BJ (cell line): ENCODE measurements at regions of chr10 and their contacts with region 1.

Region 1: DNA sequence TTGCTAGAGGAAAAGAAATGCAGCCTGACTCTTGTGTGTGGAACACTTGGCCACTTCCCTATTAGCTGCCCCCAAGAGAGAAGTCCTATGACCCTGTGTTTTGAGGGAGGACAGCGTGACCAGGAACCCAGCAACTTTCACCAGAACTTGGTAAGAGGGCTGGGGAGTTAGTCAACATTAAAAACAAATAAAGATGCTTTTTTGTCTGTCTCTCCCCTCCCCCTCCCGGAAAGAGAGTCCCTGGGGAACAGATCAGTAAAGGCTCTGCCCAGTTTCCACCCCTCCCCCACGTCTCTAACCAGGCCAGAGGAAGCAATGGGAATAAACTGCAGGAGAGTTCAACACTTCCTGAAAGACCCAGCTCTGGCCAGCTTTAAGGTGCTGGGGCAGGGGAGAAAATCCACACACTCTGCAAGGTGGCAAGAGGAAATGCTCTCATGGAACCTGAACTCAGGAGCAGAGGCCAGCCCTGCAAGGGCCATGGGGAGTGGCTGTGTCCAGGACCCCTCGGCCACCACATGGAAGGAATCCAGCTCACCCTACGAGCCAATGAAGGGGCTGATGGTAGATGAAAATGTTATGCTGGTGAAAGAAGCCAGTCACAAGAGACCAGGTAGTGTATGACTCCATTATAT is 21.5 kb downstream of the SH3PXD2A start:
- DNase-seq: no peak
- H3K4me3 ChIP-seq: no peak overlapping the region
- H3K27me3 ChIP-seq: no peaks in the 10 kb centered on the region
- CTCF ChIP-seq: no peak

Region 2: GRCh38 chr10:103592186-103593021 is 241.4 kb before region 1 on chr10:
- CTCF ChIA-PET with region 1: no interaction called
- POLR2A ChIA-PET with region 1: no interaction called
- DNase-seq: no peak
- H3K4me3 ChIP-seq: no peak overlapping the region
- H3K27me3 ChIP-seq: no peaks in the 10 kb centered on the region
- CTCF ChIP-seq: peak; percentile 76

Region 3: DNA sequence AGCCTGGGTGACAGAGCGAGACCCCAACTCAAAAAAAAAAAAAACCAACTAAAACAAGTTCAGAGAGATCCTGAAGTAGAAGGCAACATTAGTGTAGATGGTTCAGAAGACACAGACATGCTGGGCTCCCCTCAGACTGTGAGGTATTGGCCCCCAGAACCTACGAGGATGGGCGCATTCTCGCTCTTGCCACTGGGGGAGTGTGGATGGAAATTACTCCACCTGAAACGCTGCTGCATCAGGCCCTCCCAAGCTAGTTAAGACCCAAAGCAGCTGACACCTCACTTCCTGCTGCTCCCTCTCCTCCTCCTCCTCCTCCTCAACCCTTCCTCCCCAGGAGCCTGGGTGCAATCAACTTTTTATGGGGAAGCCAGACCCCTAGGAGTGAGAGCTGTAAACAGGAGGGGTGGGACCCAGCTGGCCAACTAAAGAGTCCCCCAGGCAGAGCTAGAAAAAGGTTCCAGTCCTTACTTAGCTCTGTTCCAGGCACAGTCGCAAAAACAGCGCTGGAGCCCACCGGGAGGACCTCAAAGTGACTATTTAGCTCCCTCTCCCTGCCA is 14.1 kb after region 1 on chr10:
- CTCF ChIA-PET with region 1: interaction called, 10 read pairs
- POLR2A ChIA-PET with region 1: no interaction called
- DNase-seq: no peak
- H3K4me3 ChIP-seq: no peak overlapping the region
- H3K27me3 ChIP-seq: no peaks in the 10 kb centered on the region
- CTCF ChIP-seq: peak; percentile 34

Region 4: GRCh38 chr10:104028146-104028545 is 194.3 kb after region 1 on chr10:
- CTCF ChIA-PET with region 1: no interaction called
- POLR2A ChIA-PET with region 1: no interaction called
- DNase-seq: no peak
- H3K4me3 ChIP-seq: no peak overlapping the region
- H3K27me3 ChIP-seq: no peaks in the 10 kb centered on the region
- CTCF ChIP-seq: peak; percentile 37

Region 5: DNA sequence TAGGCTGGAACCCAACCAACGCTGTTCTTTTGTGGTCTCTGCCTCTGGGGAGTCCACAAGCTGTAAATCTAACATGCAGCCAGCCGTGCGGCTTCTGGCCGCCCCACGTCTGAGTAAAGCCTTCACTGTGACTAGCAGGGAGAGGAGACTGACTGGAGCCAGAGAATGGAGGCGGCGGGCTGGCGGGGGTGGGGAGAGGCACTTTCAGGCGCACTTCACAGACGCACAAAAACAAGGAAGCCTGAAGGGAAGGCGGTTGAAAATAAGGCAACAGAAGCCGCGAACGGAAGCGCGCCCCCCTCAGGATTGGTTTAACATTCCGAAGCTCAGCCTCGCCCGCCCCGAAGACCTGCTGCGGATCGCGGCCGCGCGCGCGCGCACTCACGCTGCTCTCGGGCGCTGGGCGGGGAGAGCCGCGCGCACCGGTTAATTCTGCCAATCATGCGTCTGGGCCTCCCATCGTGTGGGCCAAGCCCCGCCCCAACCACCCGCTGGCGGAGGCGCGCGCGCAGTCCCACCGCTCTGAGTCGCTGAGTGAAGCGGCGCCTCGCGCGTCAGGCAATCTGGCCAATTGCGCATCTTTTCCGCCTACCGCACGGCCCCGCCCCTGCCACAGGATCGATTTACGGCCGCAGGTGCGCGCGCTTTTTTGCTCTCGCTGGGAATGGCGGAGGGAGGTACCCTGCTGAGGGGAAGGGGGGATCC is 287.8 kb after region 1 on chr10 and contains the start of gene SFR1:
- CTCF ChIA-PET with region 1: no interaction called
- POLR2A ChIA-PET with region 1: no interaction called
- DNase-seq: peak; percentile 94
- H3K4me3 ChIP-seq: peak within 1 kb of the TSS; percentile 70
- H3K27me3 ChIP-seq: no peaks in the 10 kb centered on the region
- CTCF ChIP-seq: peak; percentile 60
- polyA plus RNA-seq, gene SFR1: 1.5 and 2.4 TPM in 2 replicates